Activated naive CD4-positive, alpha-beta T cell treated with anti-CD3 and anti-CD28 coated beads for 36 hours (primary cell): ENCODE measurements at regions of chr7 and their contacts with region 1.

Region 1: GRCh38 chr7:106285051-106285854 is 470 bp upstream of the NAMPT start:
- DNase-seq: peak; percentile 100
- H3K4me3 Mint-ChIP-seq: peak overlapping the region; percentile 92
- H3K27ac Mint-ChIP-seq: peak overlapping the region; percentile 99
- H3K4me1 Mint-ChIP-seq: peaks cover 45% of the 10 kb centered on the region
- H3K27me3 Mint-ChIP-seq: peaks cover under 1% of the 10 kb centered on the region

Region 2: DNA sequence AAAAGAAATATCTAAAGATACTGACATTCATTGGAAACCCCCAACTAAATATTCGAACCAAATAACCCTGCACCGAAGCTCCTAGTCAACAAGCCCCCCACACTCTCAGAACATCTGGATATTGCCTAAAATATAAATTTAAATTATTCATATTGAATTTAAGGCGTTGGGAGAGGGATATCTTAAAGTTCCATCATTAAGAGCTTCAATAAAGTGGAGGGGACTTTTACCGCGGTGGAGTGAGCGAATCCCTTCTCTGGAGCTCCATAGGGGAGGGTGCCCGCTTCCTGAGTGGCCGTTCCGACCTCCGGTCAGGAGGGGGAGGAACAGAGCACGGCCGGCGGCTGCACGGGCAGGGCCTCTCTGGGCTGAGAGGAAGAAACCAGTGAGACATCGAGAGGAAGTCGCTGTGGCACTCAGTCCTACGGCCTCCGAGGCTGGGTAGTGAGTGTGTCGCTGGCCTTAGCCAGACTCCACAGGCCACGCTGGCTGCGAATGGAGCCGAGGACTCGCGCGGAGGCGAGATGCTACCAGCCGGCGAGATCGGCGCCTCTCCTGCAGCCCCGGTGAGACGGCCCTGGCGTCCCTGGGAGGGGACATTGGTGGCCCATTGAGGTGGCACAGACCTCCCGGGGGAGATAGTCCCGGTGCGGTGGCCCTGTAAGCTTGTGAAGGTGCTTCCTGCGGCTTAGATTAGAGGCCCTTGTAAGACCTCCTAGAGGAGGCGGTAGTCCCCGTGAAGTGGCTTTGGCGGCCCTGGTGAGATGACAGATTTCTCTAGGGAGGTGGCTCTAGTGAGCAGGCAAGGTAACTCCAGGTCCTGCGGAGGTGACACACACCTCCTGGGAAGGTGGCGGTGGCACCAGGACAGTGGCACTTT is 753.2 kb before region 1 on chr7 and contains the start of gene RINT1:
- CTCF ChIA-PET with region 1: no interaction called
- intact Hi-C with region 1: loop called (anchors 2 kb)
- DNase-seq: peak; percentile 95
- H3K4me3 Mint-ChIP-seq: peak within 1 kb of the TSS; percentile 83
- H3K27ac Mint-ChIP-seq: peak within 1 kb of the TSS; percentile 85
- H3K4me1 Mint-ChIP-seq: peaks cover 23% of the 10 kb centered on the region
- H3K27me3 Mint-ChIP-seq: no peaks in the 10 kb centered on the region
- total RNA-seq, gene RINT1: 22.1 to 25.2 TPM

Region 3: DNA sequence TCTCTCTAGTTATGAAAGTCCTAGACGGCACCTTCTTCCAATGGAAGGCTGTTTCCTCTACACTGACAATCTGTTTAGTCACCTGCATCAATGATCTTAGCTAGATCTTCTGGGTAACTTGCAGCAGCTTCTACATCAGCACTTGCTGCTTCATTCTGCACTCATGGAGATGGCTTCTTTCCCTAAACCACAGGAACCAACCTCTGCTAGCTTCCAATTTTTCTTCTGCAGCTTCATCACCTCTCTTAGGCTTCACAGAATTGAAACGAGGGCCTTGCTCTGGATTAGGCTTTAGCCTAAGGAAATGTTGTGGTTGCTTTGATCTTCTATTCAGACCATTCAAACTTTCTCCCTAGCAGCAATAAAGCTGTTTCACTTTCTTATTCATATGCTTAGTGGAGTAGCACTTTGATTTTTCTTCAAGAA is 25.1 kb before region 1 on chr7:
- CTCF ChIA-PET with region 1: no interaction called
- intact Hi-C with region 1: loop called (anchors 1 kb)
- DNase-seq: no peak
- H3K4me3 Mint-ChIP-seq: no peak overlapping the region
- H3K27ac Mint-ChIP-seq: peak overlapping the region; percentile 76
- H3K4me1 Mint-ChIP-seq: peaks cover 79% of the 10 kb centered on the region
- H3K27me3 Mint-ChIP-seq: no peaks in the 10 kb centered on the region

Region 4: DNA sequence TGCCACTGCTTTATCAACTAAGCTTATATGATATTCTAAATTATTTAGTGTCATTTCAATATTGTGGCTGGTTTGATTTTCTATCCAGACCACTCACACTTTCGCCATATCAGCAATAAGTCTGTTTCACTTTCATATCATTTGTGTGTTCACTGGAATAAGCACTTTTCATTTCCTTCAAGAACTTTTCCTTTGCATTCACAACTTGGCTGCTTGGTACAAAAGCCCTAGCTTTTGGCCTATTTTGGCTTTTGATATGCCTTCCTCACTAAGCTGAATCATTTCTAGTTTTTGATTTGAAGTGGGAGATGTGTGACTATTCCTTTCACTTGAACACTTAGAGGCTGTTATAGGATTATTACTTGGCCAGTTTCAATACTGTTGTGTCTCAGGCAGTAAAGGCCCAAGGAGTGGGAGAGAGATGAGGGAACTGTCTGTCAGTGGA is 120.5 kb after region 1 on chr7:
- CTCF ChIA-PET with region 1: no interaction called
- intact Hi-C with region 1: loop called (anchors 1 kb)
- DNase-seq: peak; percentile 53
- H3K4me3 Mint-ChIP-seq: no peak overlapping the region
- H3K27ac Mint-ChIP-seq: peak overlapping the region; percentile 50
- H3K4me1 Mint-ChIP-seq: peaks cover 32% of the 10 kb centered on the region
- H3K27me3 Mint-ChIP-seq: peaks cover 44% of the 10 kb centered on the region

Region 5: DNA sequence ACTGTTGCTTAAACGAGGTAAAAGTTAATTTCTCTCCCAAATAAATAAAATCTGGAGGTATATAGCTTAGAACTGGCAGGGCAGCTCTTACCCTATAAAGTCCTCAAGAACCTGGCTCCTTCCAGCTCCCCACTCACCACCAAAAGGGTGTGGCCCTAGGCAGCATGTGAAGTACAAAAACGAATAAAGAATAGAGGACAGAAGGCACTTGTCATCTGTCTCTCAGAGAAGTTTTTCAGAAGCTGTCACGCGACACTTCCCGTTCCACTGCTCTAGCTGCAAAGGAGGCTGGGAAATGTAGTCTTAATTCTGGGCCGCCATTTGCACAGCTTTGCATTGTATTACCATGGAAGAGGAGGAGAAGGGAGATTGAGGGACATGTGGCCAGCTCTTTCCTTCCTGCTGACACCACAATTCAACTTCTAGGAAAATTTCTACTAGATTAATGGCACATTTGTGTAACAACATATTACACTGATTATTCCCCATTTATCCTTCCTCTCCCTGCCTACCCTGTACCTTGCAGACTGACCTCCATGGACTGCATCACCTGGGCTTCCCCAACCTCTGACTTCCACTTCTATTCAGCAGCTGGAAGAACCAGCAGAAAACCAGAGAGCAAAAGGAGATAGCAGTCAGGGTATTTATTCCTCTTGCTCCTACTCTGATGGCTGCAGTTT is 313.6 kb after region 1 on chr7:
- CTCF ChIA-PET with region 1: no interaction called
- intact Hi-C with region 1: loop called (anchors 1 kb)
- DNase-seq: peak; percentile 85
- H3K4me3 Mint-ChIP-seq: peak overlapping the region; percentile 44
- H3K27ac Mint-ChIP-seq: no peak overlapping the region
- H3K4me1 Mint-ChIP-seq: peaks cover 4% of the 10 kb centered on the region
- H3K27me3 Mint-ChIP-seq: no peaks in the 10 kb centered on the region

Region 6: GRCh38 chr7:107168233-107169119 is 883.2 kb after region 1 on chr7 and contains the start of gene HBP1:
- CTCF ChIA-PET with region 1: interaction called, 3 read pairs
- intact Hi-C with region 1: loop called (anchors 1 kb)
- DNase-seq: peak; percentile 99
- H3K4me3 Mint-ChIP-seq: peak within 1 kb of the TSS; percentile 97
- H3K27ac Mint-ChIP-seq: peak within 1 kb of the TSS; percentile 99
- H3K4me1 Mint-ChIP-seq: peaks cover 23% of the 10 kb centered on the region
- H3K27me3 Mint-ChIP-seq: no peaks in the 10 kb centered on the region
- total RNA-seq, gene HBP1: 41.8 to 42.2 TPM